ENCODE measurements at regions of chr5 and their contacts with region 1.

Region 1: GRCh38 chr5:154189819-154190594 is 526 bp upstream of the GALNT10 start:
- DNase-seq: peak; percentile 65 to 93 (median 82)
- ATAC-seq: peak; percentile 81
- H3K4me3 ChIP-seq: peak overlapping the region; percentile 86 to 89
- H3K4me3 Mint-ChIP-seq: peak overlapping the region; percentile 82
- H3K27ac ChIP-seq: peak overlapping the region; percentile 60 to 72
- H3K27ac Mint-ChIP-seq: peak overlapping the region; percentile 81
- H3K4me1 ChIP-seq: peaks cover 26% of the 10 kb centered on the region
- H3K4me1 Mint-ChIP-seq: peaks cover 36% of the 10 kb centered on the region
- H3K27me3 ChIP-seq: no peaks in the 10 kb centered on the region
- H3K27me3 Mint-ChIP-seq: no peaks in the 10 kb centered on the region
- CTCF ChIP-seq: peak; percentile 57

Region 2: GRCh38 chr5:154038707-154039457 is 151.1 kb before region 1 on chr5 and contains the starts of genes FAM114A2 and MFAP3:
- CTCF ChIA-PET with region 1: interaction called, 4 read pairs
- POLR2A ChIA-PET with region 1: interaction called, 22 read pairs
- intact Hi-C with region 1: loop called (anchors 1 kb)
- DNase-seq: peak; percentile 77 to 93 (median 88)
- ATAC-seq: peak; percentile 97
- H3K4me3 ChIP-seq: peak within 1 kb of the TSS; percentile 72 to 91
- H3K4me3 Mint-ChIP-seq: peak within 1 kb of the TSS; percentile 95
- H3K27ac ChIP-seq: peak within 1 kb of the TSS; percentile 84 to 95
- H3K27ac Mint-ChIP-seq: peak within 1 kb of the TSS; percentile 98
- H3K4me1 ChIP-seq: peaks cover 25% of the 10 kb centered on the region
- H3K4me1 Mint-ChIP-seq: peaks cover 76% of the 10 kb centered on the region
- H3K27me3 ChIP-seq: no peaks in the 10 kb centered on the region
- H3K27me3 Mint-ChIP-seq: no peaks in the 10 kb centered on the region
- CTCF ChIP-seq: no peak
- total RNA-seq, gene FAM114A2: 24.9 to 26.6 TPM
- total RNA-seq, gene MFAP3: 16.6 to 20.2 TPM

Region 3: GRCh38 chr5:154202379-154203260 is 12.6 kb after region 1 on chr5:
- CTCF ChIA-PET with region 1: interaction called, 8 read pairs
- POLR2A ChIA-PET with region 1: interaction called, 10 read pairs
- intact Hi-C with region 1: loop called in 1 of 2 experiments (anchors 1 kb)
- DNase-seq: peak in 5 of 9 experiments; percentile 37 to 67 (median 53)
- ATAC-seq: peak; percentile 61
- H3K4me3 ChIP-seq: peak overlapping the region in 1 of 2 experiments; percentile 3
- H3K4me3 Mint-ChIP-seq: peak overlapping the region; percentile 58
- H3K27ac ChIP-seq: peak overlapping the region in 1 of 2 experiments; percentile 70
- H3K27ac Mint-ChIP-seq: peak overlapping the region; percentile 88
- H3K4me1 ChIP-seq: peaks cover 50% of the 10 kb centered on the region
- H3K4me1 Mint-ChIP-seq: peaks cover 71% of the 10 kb centered on the region
- H3K27me3 ChIP-seq: no peaks in the 10 kb centered on the region
- H3K27me3 Mint-ChIP-seq: no peaks in the 10 kb centered on the region
- CTCF ChIP-seq: no peak

Region 4: DNA sequence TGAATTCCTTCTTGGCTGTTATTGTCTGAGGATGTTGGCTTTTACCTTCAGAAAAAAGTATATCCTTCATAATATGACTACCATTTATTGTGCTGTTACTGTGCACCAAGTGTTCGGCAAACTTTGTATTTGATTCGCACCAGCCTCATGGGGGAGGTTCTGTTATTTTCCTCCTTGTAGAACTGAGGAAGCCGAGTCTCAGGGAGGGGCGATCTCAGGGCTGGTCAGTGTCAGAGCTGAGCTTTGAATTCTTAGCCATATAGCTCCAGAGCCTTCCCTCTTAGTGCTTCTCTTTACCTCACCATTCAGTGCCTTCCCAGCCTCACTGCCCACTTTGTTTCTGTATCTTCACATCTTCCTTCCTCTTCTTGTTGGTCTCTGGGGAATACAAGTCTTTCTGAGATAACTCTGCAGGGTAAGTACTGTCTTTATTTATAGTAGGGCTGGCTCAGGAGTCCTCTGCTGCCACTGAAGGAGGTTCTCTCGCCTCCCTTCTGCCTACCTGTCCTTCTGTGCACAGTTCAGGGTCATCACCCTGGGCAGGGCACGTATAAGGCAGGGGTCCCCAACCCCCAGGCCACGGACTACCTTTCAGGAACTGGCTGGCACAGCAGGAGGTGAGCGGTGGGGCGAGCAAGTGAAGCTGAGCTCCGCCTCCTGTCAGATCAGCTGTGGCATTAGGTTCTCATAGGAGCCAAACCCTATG is 48.9 kb after region 1 on chr5:
- CTCF ChIA-PET with region 1: interaction called, 4 read pairs
- POLR2A ChIA-PET with region 1: interaction called, 4 read pairs
- intact Hi-C with region 1: loop called in 1 of 2 experiments (anchors 5 kb)
- DNase-seq: no peak
- ATAC-seq: no peak
- H3K4me3 ChIP-seq: no peak overlapping the region
- H3K4me3 Mint-ChIP-seq: no peak overlapping the region
- H3K27ac ChIP-seq: no peak overlapping the region
- H3K27ac Mint-ChIP-seq: no peak overlapping the region
- H3K4me1 ChIP-seq: peaks cover 4% of the 10 kb centered on the region
- H3K4me1 Mint-ChIP-seq: peaks cover 42% of the 10 kb centered on the region
- H3K27me3 ChIP-seq: no peaks in the 10 kb centered on the region
- H3K27me3 Mint-ChIP-seq: no peaks in the 10 kb centered on the region
- CTCF ChIP-seq: no peak

Region 5: DNA sequence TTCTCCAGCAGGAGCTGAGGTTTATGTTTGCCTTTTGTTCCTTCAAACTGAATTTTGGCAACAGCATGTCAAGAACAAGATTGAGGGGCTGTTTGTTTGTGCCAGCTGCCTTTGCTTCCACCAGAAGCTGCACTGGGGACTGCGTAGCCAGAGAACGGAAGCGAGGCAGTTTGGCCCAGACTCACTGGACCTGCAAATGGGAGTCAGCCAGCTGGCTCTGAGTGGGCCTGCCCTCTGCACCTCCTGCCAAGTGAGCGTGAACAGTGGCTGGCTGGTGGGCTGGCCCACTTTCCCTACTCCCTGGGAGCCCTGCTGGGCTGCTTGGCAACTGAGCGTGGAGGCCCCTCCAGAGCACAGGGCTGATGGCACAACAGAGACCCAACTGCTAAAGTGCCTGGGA is 112.2 kb after region 1 on chr5:
- CTCF ChIA-PET with region 1: no interaction called
- POLR2A ChIA-PET with region 1: no interaction called
- intact Hi-C with region 1: loop called in 1 of 2 experiments (anchors 10 kb)
- DNase-seq: no peak
- ATAC-seq: no peak
- H3K4me3 ChIP-seq: no peak overlapping the region
- H3K4me3 Mint-ChIP-seq: no peak overlapping the region
- H3K27ac ChIP-seq: no peak overlapping the region
- H3K27ac Mint-ChIP-seq: no peak overlapping the region
- H3K4me1 ChIP-seq: no peaks in the 10 kb centered on the region
- H3K4me1 Mint-ChIP-seq: no peaks in the 10 kb centered on the region
- H3K27me3 ChIP-seq: no peaks in the 10 kb centered on the region
- H3K27me3 Mint-ChIP-seq: no peaks in the 10 kb centered on the region
- CTCF ChIP-seq: no peak

Region 6: DNA sequence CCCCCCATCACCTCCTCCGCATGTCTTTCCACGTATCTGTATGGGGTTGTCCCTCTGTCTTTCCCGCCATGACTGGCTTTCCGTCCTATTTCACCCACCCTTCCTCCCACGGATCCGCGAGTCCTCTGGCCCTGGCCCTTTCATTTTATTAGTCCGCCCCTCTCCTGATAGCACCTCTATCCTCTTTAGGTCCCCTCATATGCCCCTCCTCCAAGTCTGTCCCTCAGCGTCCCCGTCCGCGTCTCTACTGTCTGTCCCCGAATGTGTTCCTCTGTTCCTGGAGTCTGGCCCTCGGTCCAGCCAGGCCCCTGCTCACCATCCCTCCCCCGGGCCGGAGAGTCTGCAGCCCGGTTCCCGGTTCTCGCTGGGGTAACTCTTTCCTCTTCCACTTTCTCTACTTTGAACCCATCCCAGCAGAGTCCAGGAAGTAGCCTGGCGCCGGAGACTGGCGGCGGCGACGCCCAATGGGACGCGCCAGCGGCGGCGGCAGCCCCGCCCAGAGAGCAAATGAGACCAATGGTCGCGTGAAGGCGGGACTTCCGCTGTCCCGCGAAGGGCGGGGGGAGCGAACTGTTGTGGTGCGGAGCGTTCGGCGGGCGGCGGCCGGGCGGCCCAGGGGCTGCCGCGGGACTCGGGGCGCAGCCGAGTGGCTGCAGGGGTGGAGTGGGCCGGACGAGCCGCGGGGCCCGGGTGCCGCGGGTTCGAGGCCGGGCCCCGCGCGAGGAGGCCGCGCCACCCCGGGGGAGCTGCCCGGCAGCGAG is 255.6 kb after region 1 on chr5 and contains the start of gene SAP30L:
- CTCF ChIA-PET with region 1: interaction called, 5 read pairs
- POLR2A ChIA-PET with region 1: interaction called, 5 read pairs
- intact Hi-C with region 1: loop called (anchors 1 to 2 kb)
- DNase-seq: peak; percentile 92 to 98 (median 95)
- ATAC-seq: peak; percentile 93
- H3K4me3 ChIP-seq: peak within 1 kb of the TSS; percentile 98 to 100
- H3K4me3 Mint-ChIP-seq: peak within 1 kb of the TSS; percentile 98
- H3K27ac ChIP-seq: peak within 1 kb of the TSS; percentile 77 to 79
- H3K27ac Mint-ChIP-seq: peak within 1 kb of the TSS; percentile 96
- H3K4me1 ChIP-seq: peaks cover 40% of the 10 kb centered on the region
- H3K4me1 Mint-ChIP-seq: peaks cover 64% of the 10 kb centered on the region
- H3K27me3 ChIP-seq: no peaks in the 10 kb centered on the region
- H3K27me3 Mint-ChIP-seq: no peaks in the 10 kb centered on the region
- CTCF ChIP-seq: no peak
- total RNA-seq, gene SAP30L: 24.1 to 25.4 TPM

Region 7: DNA sequence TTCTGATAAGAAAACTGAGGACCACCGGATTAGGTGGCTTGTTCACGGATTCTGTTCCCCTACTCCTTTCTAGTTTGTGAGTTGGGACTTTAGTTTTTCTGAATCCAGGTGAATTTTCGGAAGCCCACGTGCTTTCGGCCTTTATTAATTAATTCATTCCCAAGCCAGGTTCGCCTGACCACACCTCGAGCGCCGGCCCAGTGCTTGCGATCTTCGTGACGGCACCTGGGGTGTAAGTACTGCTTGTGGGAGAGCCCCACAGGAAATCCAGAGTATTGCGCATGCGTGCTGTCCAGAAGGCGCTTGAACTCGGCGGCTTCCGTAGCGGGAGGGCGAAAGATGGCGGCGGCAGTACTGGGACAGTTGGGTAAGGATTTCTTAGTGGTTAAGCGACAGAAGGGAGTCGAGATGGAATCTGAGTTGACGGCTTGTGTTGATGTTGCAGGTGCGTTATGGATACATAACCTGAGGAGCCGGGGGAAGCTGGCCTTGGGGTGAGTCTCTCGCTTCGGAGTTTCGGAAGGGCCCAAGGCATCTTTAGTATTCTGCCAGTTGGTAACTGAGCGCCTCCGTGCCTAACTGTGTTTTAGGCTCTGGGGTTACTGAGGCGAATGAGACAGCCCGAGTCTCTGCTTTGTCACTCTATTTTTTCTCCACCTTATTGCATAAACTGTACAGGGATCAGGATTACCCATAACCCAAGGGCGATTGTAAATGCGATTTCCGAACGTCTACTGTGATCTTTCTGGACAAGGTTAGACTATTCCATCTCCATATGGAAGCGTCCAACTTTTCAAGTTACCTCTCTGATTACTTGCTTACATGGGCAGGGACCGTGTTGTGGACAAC is 751.0 kb after region 1 on chr5 and contains the start of gene MRPL22:
- CTCF ChIA-PET with region 1: no interaction called
- POLR2A ChIA-PET with region 1: no interaction called
- intact Hi-C with region 1: loop called (anchors 5 to 10 kb)
- DNase-seq: peak; percentile 89 to 97 (median 95)
- ATAC-seq: peak; percentile 70
- H3K4me3 ChIP-seq: peak within 1 kb of the TSS; percentile 82 to 92
- H3K4me3 Mint-ChIP-seq: peak within 1 kb of the TSS; percentile 100
- H3K27ac ChIP-seq: peak within 1 kb of the TSS; percentile 73 to 80
- H3K27ac Mint-ChIP-seq: peak within 1 kb of the TSS; percentile 98
- H3K4me1 ChIP-seq: peaks cover 36% of the 10 kb centered on the region
- H3K4me1 Mint-ChIP-seq: peaks cover 53% of the 10 kb centered on the region
- H3K27me3 ChIP-seq: no peaks in the 10 kb centered on the region
- H3K27me3 Mint-ChIP-seq: no peaks in the 10 kb centered on the region
- CTCF ChIP-seq: no peak
- total RNA-seq, gene MRPL22: 42.2 TPM

Measured in CD8-positive, alpha-beta T cell (primary cell).